Activated T-helper 1 cell treated with anti-CD3 and anti-CD28 coated beads, Interleukin-12 subunit alpha, Interleukin-12 subunit beta, Interleukin-2, Interleukin-4 antibody, amounts not matched to agents 30 ng/mL and 10 ng/mL and 1 ng/mL, durations not matched to agents 14 hours and 24 hours and 36 hours (primary cell): ENCODE measurements at regions of chr17 and their contacts with region 1.

Region 1: GRCh38 chr17:50151041-50151936 is 812 bp upstream of the PPP1R9B start:
- DNase-seq: peak; percentile 86
- H3K4me3 Mint-ChIP-seq: peak overlapping the region; percentile 92
- H3K27ac Mint-ChIP-seq: peak overlapping the region; percentile 95
- H3K4me1 Mint-ChIP-seq: peaks cover 41% of the 10 kb centered on the region
- H3K27me3 Mint-ChIP-seq: no peaks in the 10 kb centered on the region

Region 2: DNA sequence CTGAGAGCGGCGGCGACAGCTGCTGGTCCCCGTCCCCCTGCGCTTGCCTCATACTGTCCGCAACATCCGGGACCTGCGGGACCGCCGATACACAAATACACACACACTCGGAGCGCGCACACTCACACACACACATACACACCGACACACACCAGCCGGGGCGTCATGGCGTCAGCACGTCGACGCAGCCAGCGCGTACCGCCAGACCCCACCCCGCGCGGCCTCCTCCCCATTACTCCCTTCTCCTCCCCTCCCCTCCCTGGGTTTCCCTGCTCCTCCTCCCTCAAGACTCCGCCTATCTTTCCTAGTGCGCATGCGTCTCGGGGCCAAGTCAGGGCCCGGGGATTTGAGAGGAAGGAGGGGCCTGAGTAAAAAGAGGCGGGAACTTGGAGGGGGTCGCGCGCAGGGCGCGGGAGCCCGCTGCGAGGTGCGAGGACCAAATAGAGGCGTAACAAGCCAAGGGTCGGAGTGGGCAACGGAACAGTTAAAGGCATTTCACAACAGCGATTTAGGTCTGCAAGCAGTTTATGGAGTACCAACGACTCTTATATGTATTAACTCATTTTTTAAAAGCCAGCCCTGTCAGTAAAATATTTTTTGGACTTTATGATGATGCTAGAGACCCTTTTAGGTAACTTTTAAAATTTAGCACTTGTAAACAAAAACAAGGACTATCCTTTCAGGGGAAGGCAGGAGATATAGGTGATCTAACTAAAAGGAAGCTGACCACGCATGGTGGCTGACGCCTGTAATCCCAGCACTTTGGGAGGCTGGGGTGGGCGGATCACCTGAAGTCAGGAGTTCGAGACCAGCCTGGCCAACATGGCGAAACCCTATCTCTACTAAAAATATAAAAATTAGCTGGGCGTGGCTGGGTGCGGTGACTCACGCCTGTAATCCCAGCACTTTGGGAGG is 473.1 kb before region 1 on chr17 and contains the start of gene SPOP:
- intact Hi-C with region 1: loop called (anchors 5 kb)
- DNase-seq: peak; percentile 99
- H3K4me3 Mint-ChIP-seq: peak within 1 kb of the TSS; percentile 91
- H3K27ac Mint-ChIP-seq: peak within 1 kb of the TSS; percentile 99
- H3K4me1 Mint-ChIP-seq: peaks cover 41% of the 10 kb centered on the region
- H3K27me3 Mint-ChIP-seq: peaks cover 5% of the 10 kb centered on the region
- total RNA-seq, gene SPOP: 58.3 and 61.9 TPM in 2 replicates

Region 3: DNA sequence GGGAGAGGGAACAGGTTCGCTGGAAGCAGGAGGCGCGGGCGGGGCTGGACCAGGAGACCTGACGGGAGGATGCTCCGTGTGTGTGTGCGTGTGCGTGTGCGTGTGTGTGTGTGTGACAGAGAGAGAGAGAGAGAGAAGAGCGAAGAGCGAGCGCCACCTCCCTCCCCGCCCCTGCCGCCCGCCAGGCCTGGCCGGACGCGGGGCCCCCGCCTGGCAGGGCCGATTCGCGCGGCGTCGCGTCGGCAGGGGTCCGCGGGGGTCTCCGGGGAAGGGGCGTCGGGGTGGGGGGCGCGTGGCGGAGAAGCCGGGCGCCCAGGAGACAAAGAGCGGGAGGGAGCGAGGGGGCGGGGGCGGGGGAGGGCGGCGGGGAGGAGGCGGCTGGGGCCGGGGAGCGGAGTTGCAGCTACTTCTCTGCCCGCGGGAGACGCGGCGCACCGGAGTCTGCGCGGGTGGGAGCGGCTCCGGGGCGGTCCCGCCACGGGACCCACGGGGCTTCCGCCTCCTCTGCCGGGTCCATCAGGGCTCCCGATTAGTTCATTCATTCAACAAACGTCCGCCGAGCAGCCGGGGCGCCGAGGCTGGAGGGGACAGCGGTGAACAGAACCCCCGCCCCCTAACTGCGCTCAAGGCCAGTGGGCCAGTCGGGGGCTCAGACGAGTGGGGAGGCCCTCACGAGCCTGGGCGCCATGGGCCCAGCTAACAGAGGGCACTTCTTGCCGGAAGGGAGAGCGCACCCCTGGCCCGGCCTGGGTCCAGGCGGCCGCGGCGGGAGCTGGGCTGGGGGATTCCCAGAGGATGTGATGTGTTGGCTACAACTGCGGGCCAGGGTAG is 21.3 kb before region 1 on chr17 and contains the start of gene SAMD14:
- intact Hi-C with region 1: loop called (anchors 2 kb)
- DNase-seq: peak; percentile 52
- H3K4me3 Mint-ChIP-seq: peak within 1 kb of the TSS; percentile 83
- H3K27ac Mint-ChIP-seq: peak within 1 kb of the TSS; percentile 80
- H3K4me1 Mint-ChIP-seq: peaks cover 37% of the 10 kb centered on the region
- H3K27me3 Mint-ChIP-seq: peaks cover 26% of the 10 kb centered on the region
- total RNA-seq, gene SAMD14: 1.6 and 3.6 TPM in 2 replicates